Heart right ventricle (tissue), 16 donors: ENCODE measurements at regions of chr16 and their contacts with region 1.

Region 1: DNA sequence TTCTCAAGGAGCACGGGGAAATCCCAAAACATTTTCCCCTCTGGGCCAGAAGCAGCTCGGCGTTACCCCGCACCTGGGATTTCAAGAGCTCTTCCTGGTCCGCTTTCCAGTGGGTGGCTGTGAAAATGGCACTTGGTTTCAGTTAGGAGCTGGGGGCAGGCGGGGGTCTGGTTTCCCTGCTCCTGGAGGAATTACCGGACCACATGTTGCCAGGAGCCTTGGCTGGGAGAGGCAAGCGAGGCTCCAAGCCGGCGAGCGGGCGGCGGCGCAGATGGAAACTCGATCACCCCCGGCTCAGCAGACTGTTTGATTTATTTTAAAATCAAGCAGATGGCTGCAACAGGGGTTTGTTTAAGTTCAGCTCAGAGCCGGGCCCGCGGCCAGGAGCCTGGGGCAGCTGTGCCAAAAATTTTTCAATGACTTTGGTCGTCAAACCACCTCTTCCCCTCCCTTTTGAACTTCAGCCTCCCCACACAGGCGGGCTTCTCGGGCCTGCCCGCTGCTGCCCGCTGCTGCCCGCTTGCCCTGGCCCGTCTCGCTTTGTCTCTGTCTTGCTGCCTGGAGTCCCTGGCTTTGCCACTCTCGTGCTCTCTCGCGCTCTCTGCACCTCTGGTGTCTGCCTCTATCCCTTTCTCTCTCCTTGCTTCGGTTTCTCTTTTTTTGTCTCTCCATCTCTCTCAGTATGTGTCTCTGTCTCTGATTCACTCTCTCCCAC is 108.0 kb upstream of the CIBAR2 start:
- DNase-seq: peak; percentile 85
- ATAC-seq: peak; percentile 79 to 90 (median 86)
- H3K4me3 ChIP-seq: peak overlapping the region in 9 of 10 donors; percentile 12 to 45 (median 37)
- H3K27ac ChIP-seq: peak overlapping the region in 9 of 10 donors; percentile 21 to 79 (median 62)
- H3K4me1 ChIP-seq: peaks cover 8 to 26% (median 14%) of the 10 kb centered on the region in 9 donors
- H3K27me3 ChIP-seq: no peaks in the 10 kb centered on the region
- CTCF ChIP-seq: peak in 6 of 9 donors; percentile 8 to 41 (median 18)

Region 2: GRCh38 chr16:85206472-85207356 is 13.6 kb before region 1 on chr16:
- intact Hi-C with region 1: loop called in 1 of 10 experiments (anchors 1 kb)
- DNase-seq: peak; percentile 69 to 84
- ATAC-seq: peak; percentile 25 to 77 (median 68)
- H3K4me3 ChIP-seq: peak overlapping the region in 1 of 10 donors; percentile 10
- H3K27ac ChIP-seq: peak overlapping the region in 9 of 10 donors; percentile 25 to 71 (median 64)
- H3K4me1 ChIP-seq: peaks cover 24 to 83% (median 50%) of the 10 kb centered on the region in 9 donors
- H3K27me3 ChIP-seq: no peaks in the 10 kb centered on the region
- CTCF ChIP-seq: no peak